CD14-positive monocyte (primary cell): ENCODE measurements at regions of chr2 and their contacts with region 1.

Region 1: DNA sequence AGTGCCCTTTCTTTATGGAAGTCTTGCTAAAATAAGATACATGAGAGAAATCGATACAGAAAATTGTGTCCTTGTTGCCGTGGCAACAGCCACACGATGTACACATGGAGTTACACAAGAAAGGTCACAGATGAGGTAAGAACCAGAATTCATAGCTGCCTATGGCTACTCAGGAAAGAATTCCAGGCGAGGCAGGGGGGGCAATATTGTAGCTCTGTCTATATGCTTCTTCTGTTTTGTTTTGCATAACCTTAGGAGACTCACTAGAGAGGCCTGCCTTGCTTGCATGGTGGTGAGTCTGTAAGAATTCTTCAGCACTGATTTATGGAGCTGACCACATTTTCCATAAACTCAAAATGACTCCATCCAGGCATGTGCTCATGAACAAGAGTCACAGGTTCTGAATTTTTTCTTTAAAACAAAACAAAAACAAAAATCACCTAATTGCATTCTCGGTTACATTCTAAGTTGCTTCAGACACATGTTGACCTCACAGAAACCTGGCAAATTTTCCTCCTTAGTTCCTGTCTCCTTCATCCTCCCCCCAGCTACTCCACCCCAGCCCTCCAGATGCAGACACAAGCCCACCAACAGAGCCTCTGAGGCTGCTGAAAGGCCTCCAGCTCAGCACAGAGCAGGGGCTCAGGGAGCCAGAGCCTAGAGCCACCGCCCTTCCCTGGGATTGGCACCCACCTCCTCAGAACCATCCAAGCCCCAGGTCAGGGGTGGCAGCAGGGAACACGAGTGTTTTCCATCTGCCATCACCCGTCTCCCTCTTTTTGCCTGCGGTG is 183.5 kb downstream of the ANTXR1 start:
- DNase-seq: peak in 2 of 3 donors; percentile 21 to 28
- H3K4me3 ChIP-seq: no peak overlapping the region
- H3K4me3 Mint-ChIP-seq: no peak overlapping the region
- H3K27ac ChIP-seq: no peak overlapping the region
- H3K27ac Mint-ChIP-seq: peak overlapping the region in 2 of 7 donors; percentile 7 to 17
- H3K4me1 ChIP-seq: peaks cover 9 to 22% of the 10 kb centered on the region in 2 donors
- H3K4me1 Mint-ChIP-seq: no peaks in the 10 kb centered on the region
- H3K27me3 ChIP-seq: no peaks in the 10 kb centered on the region
- H3K27me3 Mint-ChIP-seq: peaks cover 2 to 10% (median 2%) of the 10 kb centered on the region in 3 donors
- CTCF ChIP-seq: no peak

Region 2: GRCh38 chr2:69095305-69095704 is 101.2 kb before region 1 on chr2:
- intact Hi-C with region 1: loop called in 1 of 2 experiments (anchors 10 kb)
- DNase-seq: no peak
- H3K4me3 ChIP-seq: no peak overlapping the region
- H3K4me3 Mint-ChIP-seq: peak overlapping the region in 1 of 2 donors; percentile 31
- H3K27ac ChIP-seq: no peak overlapping the region
- H3K27ac Mint-ChIP-seq: peak overlapping the region in 1 of 7 donors; percentile 1
- H3K4me1 ChIP-seq: peaks cover 13 to 19% of the 10 kb centered on the region in 2 donors
- H3K4me1 Mint-ChIP-seq: peaks cover 19% of the 10 kb centered on the region
- H3K27me3 ChIP-seq: no peaks in the 10 kb centered on the region
- H3K27me3 Mint-ChIP-seq: peaks cover 0 to 3% (median 3%) of the 10 kb centered on the region in 3 donors
- CTCF ChIP-seq: no peak

Region 3: GRCh38 chr2:69149631-69150215 is 46.8 kb before region 1 on chr2:
- intact Hi-C with region 1: loop called (anchors 10 kb)
- DNase-seq: no peak
- H3K4me3 ChIP-seq: no peak overlapping the region
- H3K4me3 Mint-ChIP-seq: no peak overlapping the region
- H3K27ac ChIP-seq: no peak overlapping the region
- H3K27ac Mint-ChIP-seq: no peak overlapping the region
- H3K4me1 ChIP-seq: no peaks in the 10 kb centered on the region
- H3K4me1 Mint-ChIP-seq: peaks cover 9% of the 10 kb centered on the region
- H3K27me3 ChIP-seq: no peaks in the 10 kb centered on the region
- H3K27me3 Mint-ChIP-seq: peaks cover 1 to 4% (median 2%) of the 10 kb centered on the region in 3 donors
- CTCF ChIP-seq: no peak